Endothelial cell of umbilical vein (primary cell): ENCODE measurements at regions of chr13 and their contacts with region 1.

Region 1: DNA sequence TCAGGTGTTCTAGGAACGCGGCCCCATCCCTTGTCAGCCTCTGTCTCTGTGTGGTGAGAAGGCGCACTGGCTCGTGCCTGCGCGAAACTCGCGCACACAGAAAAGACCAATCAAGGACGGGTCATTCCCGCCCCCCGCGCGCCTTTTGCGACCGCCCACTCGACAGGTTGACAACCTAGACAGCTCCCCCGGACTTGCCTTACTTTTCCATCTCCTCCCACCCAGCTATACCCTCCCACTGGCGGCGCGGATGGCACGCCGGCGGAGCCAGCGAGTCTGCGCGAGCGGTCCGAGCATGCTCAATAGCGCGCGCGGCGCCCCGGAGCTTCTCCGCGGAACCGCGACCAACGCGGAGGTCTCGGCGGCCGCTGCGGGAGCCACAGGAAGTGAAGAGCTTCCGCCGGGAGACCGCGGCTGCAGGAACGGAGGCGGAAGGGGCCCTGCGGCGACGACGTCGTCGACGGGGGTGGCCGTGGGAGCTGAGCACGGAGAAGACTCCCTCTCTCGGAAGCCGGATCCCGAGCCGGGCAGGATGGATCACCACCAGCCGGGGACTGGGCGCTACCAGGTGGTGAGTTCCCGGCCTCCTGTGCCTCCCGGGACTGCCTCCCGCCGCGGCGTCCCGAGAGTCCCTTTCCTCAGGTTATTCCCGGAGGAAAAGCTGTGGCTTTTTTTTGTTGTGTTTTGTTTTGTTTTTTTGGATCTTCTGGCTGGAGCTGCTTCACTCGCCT is at the start of gene NDFIP2:
- DNase-seq: peak; percentile 85
- H3K4me3 ChIP-seq: peak within 1 kb of the TSS; percentile 90 to 95 (median 93)
- H3K27ac ChIP-seq: peak within 1 kb of the TSS; percentile 23
- H3K4me1 ChIP-seq: peaks cover 9% of the 10 kb centered on the region
- H3K27me3 ChIP-seq: peaks cover 22 to 37% of the 10 kb centered on the region in 2 experiments
- CTCF ChIP-seq: no peak
- POLR2A ChIP-seq: peak; percentile 65
- total RNA-seq, gene NDFIP2: 18.5 and 21.8 TPM in 2 replicates

Region 2: DNA sequence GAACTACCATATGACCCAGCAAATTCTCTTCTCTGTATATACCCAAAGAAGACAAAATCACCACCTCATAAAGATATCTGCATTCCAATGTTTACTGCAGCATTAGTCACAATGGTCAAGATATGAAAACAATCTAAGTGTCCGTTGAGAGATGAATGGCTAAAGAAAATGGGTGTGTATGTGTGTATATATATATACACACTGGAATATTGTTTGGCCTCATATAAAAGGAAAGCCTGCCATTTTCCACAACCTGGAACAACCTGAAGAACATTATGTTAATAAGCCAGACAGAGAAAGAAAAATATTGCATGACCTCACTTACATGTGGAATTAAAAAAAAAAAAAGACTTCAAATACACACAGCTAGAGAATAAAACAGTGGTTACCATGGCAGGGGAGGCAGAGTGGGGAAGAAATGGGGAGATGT is 45.5 kb before region 1 on chr13:
- CTCF ChIA-PET with region 1: no interaction called
- POLR2A ChIA-PET with region 1: no interaction called
- dilution Hi-C with region 1: no loop called
- intact Hi-C with region 1: loop called (anchors 1 kb)
- DNase-seq: peak; percentile 46
- H3K4me3 ChIP-seq: no peak overlapping the region
- H3K27ac ChIP-seq: no peak overlapping the region
- H3K4me1 ChIP-seq: no peaks in the 10 kb centered on the region
- H3K27me3 ChIP-seq: no peaks in the 10 kb centered on the region
- CTCF ChIP-seq: no peak
- POLR2A ChIP-seq: no peak

Region 3: DNA sequence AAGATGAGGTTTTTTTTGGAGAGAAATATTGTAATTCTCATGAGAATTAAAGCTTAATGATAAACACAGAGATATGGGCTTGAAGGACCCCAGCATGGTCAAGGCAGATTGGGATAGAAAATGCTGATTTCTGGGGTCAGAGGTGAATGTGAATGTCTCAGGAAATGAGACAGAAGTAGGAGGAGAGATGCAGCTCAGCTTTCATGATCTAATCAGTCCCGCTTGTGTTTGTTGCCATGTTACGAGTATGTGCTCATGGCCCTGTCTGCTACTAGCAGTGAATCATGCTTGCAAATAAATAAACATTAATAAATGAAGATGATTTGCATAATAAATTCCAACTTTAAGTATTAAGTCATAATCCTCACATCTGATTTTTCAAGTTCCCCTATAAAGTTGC is 23.2 kb before region 1 on chr13:
- CTCF ChIA-PET with region 1: interaction called, 4 read pairs
- POLR2A ChIA-PET with region 1: interaction called, 5 read pairs
- dilution Hi-C with region 1: no loop called
- intact Hi-C with region 1: loop called (anchors 1 kb)
- DNase-seq: peak; percentile 79
- H3K4me3 ChIP-seq: no peak overlapping the region
- H3K27ac ChIP-seq: peak overlapping the region; percentile 5
- H3K4me1 ChIP-seq: peaks cover 9% of the 10 kb centered on the region
- H3K27me3 ChIP-seq: no peaks in the 10 kb centered on the region
- CTCF ChIP-seq: no peak
- POLR2A ChIP-seq: no peak

Region 4: DNA sequence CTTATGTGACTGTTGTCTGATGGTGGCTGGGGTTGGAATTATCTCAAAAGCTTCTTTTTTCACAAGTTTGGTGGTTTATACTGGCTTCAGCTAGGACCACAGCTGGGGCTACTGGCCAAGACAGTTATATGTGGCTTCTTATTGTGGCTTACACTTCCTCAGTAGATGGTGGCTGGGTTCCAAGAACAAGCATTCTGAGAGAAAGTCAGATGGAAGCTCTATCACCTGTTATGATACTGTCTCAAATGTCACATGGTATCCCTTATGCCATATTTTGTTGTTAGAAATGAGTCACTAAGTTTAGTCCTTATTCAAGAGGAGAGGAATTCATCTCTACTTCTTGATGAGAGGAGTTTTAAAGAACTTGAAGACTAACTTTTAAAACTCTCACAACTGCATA is 41.5 kb after region 1 on chr13:
- CTCF ChIA-PET with region 1: interaction called, 4 read pairs
- POLR2A ChIA-PET with region 1: no interaction called
- dilution Hi-C with region 1: no loop called
- intact Hi-C with region 1: loop called (anchors 1 kb)
- DNase-seq: peak; percentile 44
- H3K4me3 ChIP-seq: no peak overlapping the region
- H3K27ac ChIP-seq: no peak overlapping the region
- H3K4me1 ChIP-seq: peaks cover 27% of the 10 kb centered on the region
- H3K27me3 ChIP-seq: no peaks in the 10 kb centered on the region
- CTCF ChIP-seq: no peak
- POLR2A ChIP-seq: no peak

Region 5: GRCh38 chr13:79528759-79529191 is 47.7 kb after region 1 on chr13:
- CTCF ChIA-PET with region 1: interaction called, 4 read pairs
- POLR2A ChIA-PET with region 1: no interaction called
- dilution Hi-C with region 1: no loop called
- intact Hi-C with region 1: loop called (anchors 1 kb)
- DNase-seq: no peak
- H3K4me3 ChIP-seq: no peak overlapping the region
- H3K27ac ChIP-seq: no peak overlapping the region
- H3K4me1 ChIP-seq: peaks cover 21% of the 10 kb centered on the region
- H3K27me3 ChIP-seq: no peaks in the 10 kb centered on the region
- CTCF ChIP-seq: no peak
- POLR2A ChIP-seq: no peak

Region 6: DNA sequence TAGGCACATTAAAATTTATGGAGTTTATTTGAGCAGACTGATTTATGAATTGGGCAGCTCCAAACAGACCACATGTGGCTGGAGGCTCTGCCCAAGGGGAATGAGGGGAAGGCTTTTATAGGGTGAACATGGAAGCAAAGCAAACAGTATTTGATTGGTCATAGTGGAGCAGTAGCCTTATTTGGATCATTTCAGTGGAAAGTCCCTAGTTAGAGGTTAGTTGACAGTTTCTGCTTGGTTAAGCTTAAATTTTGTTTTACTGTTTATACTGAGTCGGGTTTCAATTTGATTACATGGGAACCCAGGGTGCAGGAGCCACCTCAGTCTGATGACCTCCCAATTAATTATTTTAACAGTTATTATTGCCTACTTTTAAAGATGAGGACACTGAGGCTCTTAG is 140.3 kb after region 1 on chr13:
- CTCF ChIA-PET with region 1: no interaction called
- POLR2A ChIA-PET with region 1: no interaction called
- dilution Hi-C with region 1: no loop called
- intact Hi-C with region 1: no loop called
- DNase-seq: no peak
- H3K4me3 ChIP-seq: no peak overlapping the region
- H3K27ac ChIP-seq: no peak overlapping the region
- H3K4me1 ChIP-seq: no peaks in the 10 kb centered on the region
- H3K27me3 ChIP-seq: peaks cover 5 to 6% of the 10 kb centered on the region in 2 experiments
- CTCF ChIP-seq: no peak
- POLR2A ChIP-seq: no peak

Region 7: GRCh38 chr13:79749984-79750551 is 268.9 kb after region 1 on chr13:
- CTCF ChIA-PET with region 1: no interaction called
- POLR2A ChIA-PET with region 1: no interaction called
- dilution Hi-C with region 1: no loop called
- intact Hi-C with region 1: no loop called
- DNase-seq: peak; percentile 70
- H3K4me3 ChIP-seq: no peak overlapping the region
- H3K27ac ChIP-seq: no peak overlapping the region
- H3K4me1 ChIP-seq: peaks cover 7% of the 10 kb centered on the region
- H3K27me3 ChIP-seq: no peaks in the 10 kb centered on the region
- CTCF ChIP-seq: no peak
- POLR2A ChIP-seq: no peak